ENCODE measurements at regions of chr18 and their contacts with region 1.

Region 1: DNA sequence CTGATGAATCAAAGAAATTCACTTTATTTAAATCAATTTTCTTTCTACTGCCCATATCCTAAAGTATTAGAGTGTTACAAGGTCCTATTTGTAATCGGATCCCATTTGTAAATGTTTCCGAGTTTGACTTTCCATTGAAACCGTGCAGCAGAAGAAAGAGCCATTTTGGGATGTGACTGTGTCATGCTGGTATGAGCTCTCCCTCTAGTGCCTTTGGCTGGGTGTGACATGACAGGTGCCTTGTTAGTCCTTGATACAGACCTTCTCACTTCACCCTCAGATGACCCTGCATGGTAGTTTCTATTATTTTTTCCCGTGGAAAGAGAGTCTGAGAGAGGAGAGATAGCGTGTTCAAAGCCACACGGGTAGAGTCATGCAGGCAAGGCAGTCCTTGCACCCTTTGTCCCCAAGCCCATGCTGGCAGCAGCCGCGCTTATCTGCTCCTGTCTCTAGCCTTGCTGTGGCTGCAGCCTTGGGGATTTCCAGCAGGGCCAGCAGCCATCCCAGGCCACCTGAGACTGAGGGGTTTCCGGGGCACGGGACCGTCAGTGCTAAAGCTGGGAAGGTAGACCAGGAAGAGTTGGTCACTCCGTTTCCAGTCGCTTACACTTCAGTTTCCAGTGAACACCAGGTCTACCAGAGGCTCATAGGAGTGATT is 21.4 kb downstream of the CHMP1B start:
- DNase-seq: peak in 2 of 3 donors; percentile 51 to 53
- ATAC-seq: peak; percentile 82 to 95 (median 87)
- H3K4me3 ChIP-seq: no peak overlapping the region
- H3K27ac ChIP-seq: no peak overlapping the region
- H3K4me1 ChIP-seq: no peaks in the 10 kb centered on the region
- H3K27me3 ChIP-seq: no peaks in the 10 kb centered on the region
- CTCF ChIP-seq: peak; percentile 44 to 56 (median 46)
- POLR2A ChIP-seq: no peak

Region 2: GRCh38 chr18:11733031-11733430 is 139.6 kb before region 1 on chr18:
- intact Hi-C with region 1: loop called in 1 of 2 experiments (anchors 5 kb)
- DNase-seq: peak; percentile 79 to 81 (median 80)
- ATAC-seq: peak; percentile 96 to 99 (median 98)
- H3K4me3 ChIP-seq: no peak overlapping the region
- H3K27ac ChIP-seq: no peak overlapping the region
- H3K4me1 ChIP-seq: no peaks in the 10 kb centered on the region
- H3K27me3 ChIP-seq: no peaks in the 10 kb centered on the region
- CTCF ChIP-seq: peak; percentile 76 to 95 (median 92)
- POLR2A ChIP-seq: no peak

Region 3: DNA sequence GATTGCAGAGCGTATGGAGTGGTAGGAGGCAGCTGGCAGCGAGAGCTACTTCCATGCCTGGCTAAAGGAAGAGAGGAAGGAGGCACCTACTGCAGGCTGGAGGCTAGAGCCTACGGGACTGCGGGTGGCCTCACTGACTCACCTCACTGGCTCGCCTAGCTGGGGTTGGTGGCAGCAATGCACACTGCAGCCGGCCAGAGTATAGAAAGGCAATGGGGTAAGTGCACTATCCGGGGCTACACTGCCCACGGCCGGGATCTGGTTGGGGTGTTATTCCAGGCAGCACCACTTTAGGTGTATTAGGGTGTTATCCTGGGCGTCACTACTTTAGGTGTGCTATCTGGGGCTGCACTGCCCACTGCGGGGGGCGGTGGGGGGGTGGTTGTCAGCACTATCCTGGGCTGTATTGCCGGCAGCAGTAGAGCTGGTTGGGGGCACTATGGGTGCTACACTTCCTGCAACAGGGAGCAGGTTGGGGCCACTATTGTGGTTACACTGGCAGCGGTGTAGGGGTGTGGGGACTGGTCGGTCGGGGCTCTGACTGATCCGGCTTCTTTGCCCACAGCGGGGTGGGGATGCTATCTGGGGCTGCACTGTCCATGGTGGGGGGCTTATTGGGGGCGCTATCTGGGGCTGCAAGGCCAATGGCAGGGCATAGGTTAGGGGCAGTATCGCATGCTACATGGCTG is 187.7 kb after region 1 on chr18:
- intact Hi-C with region 1: no loop called
- DNase-seq: no peak
- ATAC-seq: no peak
- H3K4me3 ChIP-seq: no peak overlapping the region
- H3K27ac ChIP-seq: no peak overlapping the region
- H3K4me1 ChIP-seq: no peaks in the 10 kb centered on the region
- H3K27me3 ChIP-seq: no peaks in the 10 kb centered on the region
- CTCF ChIP-seq: no peak
- POLR2A ChIP-seq: no peak

Measured in right lobe of liver (tissue), 6 donors.